K562 (cell line): ENCODE measurements at regions of chr15 and their contacts with region 1.

Region 1: DNA sequence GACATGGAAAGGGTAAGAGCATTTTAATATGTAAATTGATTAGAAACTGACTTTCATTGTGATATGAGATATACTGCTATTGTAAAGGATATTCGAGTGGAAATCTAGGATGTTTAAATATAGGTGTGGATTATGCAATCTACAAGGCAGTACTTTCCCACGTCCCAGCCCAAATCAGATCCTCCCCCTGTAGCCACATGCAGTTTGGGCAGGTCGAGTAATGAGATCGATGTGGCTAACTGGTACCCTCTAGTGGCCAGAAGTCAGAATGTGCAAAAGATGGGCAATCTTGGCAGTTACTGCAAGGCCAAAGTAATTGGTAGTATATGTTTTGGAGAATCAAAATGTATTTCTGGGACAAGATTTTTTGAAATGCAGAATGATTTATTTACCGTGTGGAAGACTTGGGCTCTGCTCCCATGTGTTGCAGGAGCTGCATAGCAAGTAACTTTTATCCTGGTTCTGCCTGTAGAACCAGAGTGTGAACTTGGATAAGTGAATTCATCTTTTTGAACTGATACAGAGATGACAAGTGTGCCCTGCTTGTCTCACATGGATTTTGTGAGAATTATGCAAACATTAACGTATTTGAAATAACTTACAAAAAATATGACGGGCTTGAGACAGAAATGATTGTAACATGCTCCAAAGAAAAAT is 94.5 kb upstream of the ADAMTSL3 start:
- DNase-seq: peak; percentile 75 to 80 (median 76)
- ATAC-seq: peak; percentile 97
- H3K4me3 ChIP-seq: no peak overlapping the region
- H3K27ac ChIP-seq: no peak overlapping the region
- H3K4me1 ChIP-seq: peaks cover 2 to 4% of the 10 kb centered on the region in 2 experiments; a peak in 3 of 5 replicates
- H3K27me3 ChIP-seq: no peaks in the 10 kb centered on the region
- CTCF ChIP-seq: peak; percentile 85 to 90 (median 88)
- EP300 ChIP-seq: no peak
- POLR2A ChIP-seq: no peak
- RAD21 ChIP-seq: peak; percentile 85 to 95

Region 2: GRCh38 chr15:82551666-82552247 is 1007.7 kb before region 1 on chr15:
- CTCF ChIA-PET with region 1: no interaction called
- POLR2A ChIA-PET with region 1: no interaction called
- in situ Hi-C with region 1: no loop called
- intact Hi-C with region 1: no loop called
- DNase-seq: no peak
- ATAC-seq: no peak
- H3K4me3 ChIP-seq: no peak overlapping the region
- H3K27ac ChIP-seq: no peak overlapping the region
- H3K4me1 ChIP-seq: peaks cover 12 to 16% of the 10 kb centered on the region in 2 experiments; a peak in 4 of 5 replicates
- H3K27me3 ChIP-seq: no peaks in the 10 kb centered on the region
- CTCF ChIP-seq: no peak
- EP300 ChIP-seq: no peak
- POLR2A ChIP-seq: no peak
- RAD21 ChIP-seq: no peak

Region 3: GRCh38 chr15:83248151-83249029 is 311.0 kb before region 1 on chr15:
- CTCF ChIA-PET with region 1: interaction called, 3 read pairs
- POLR2A ChIA-PET with region 1: no interaction called
- in situ Hi-C with region 1: loop called (anchors 10 kb)
- intact Hi-C with region 1: loop called (anchors 1 kb)
- DNase-seq: peak; percentile 26 to 69 (median 44)
- ATAC-seq: peak; percentile 85
- H3K4me3 ChIP-seq: no peak overlapping the region
- H3K27ac ChIP-seq: no peak overlapping the region
- H3K4me1 ChIP-seq: no peaks in the 10 kb centered on the region
- H3K27me3 ChIP-seq: peaks cover 3 to 17% of the 10 kb centered on the region in 2 experiments; a peak in 3 of 5 replicates
- CTCF ChIP-seq: peak; percentile 71 to 91 (median 85)
- EP300 ChIP-seq: no peak
- POLR2A ChIP-seq: no peak
- RAD21 ChIP-seq: peak; percentile 84 to 94

Region 4: DNA sequence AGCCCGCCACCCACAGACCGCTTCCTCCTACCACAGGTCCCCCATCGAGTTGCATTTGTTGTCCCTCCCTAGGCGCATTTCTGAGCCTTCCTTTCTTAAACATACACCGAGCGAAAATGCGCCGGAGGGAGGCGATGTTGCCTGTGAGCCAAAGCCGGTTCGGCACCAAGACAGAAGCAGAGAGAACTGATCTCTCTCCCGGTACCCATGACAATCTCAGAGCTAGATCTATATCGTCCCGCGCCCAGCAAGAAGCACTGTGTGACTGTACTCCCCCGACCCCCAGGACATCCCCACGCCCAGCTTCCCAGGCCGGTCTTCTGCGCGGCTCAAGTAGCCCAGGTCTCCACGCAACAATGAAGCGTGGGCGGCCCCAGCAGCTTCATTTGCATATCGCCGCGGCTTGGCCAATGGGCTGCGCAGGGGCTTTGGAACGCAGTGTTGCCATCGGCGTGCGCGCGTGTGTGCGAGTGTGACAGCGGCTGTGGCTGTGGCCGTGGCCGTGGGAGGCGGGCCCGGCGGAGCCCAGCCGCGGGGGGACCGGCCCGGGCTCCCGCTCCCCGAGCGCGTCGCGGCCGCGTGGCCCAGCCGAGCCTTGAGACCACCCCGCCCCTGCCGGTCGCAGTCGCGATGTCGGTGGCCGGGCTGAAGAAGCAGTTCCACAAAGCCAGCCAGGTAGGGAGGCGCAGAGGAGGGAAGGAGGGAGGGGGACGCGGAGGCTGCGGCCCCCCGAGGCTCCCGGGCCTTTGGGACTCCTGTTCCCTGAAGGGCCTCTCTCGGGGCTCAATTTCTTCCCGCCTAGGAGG is 112.3 kb before region 1 on chr15 and contains the start of gene SH3GL3:
- CTCF ChIA-PET with region 1: interaction called, 13 read pairs
- POLR2A ChIA-PET with region 1: interaction called, 4 read pairs
- in situ Hi-C with region 1: no loop called
- intact Hi-C with region 1: loop called (anchors 2 kb)
- DNase-seq: peak; percentile 82 to 91 (median 84)
- ATAC-seq: peak; percentile 96
- H3K4me3 ChIP-seq: peak within 1 kb of the TSS; percentile 62
- H3K27ac ChIP-seq: peak within 1 kb of the TSS; percentile 53; the same call in 2 of the 3 replicates
- H3K4me1 ChIP-seq: peaks cover 18 to 19% of the 10 kb centered on the region in 2 experiments; a peak in 4 of 5 replicates
- H3K27me3 ChIP-seq: no peaks in the 10 kb centered on the region; a peak in 1 of 5 replicates
- CTCF ChIP-seq: peak; percentile 65 to 71 (median 68)
- EP300 ChIP-seq: no peak
- POLR2A ChIP-seq: no peak
- RAD21 ChIP-seq: peak; percentile 63 to 78
- polyA plus RNA-seq, gene SH3GL3: 3.9 to 4.3 TPM

Region 5: DNA sequence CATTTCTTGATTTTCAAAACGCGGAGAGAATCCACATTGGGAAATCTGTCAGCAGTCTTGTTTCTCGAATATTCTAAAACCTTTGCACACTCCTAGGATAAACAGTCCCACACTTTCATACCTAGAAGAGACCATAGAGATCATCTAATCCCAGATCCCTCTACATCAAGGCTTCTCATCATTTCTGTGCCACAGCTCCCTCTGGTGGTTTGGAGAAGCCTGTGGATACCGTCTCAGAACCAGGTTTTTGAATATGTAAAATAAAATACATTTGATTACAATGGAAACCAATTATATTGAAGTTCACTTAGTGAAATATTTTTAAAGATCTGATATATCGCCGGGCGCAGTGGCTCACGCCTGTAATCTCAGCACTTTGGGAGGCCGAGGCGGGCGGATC is 464.2 kb after region 1 on chr15:
- CTCF ChIA-PET with region 1: no interaction called
- POLR2A ChIA-PET with region 1: no interaction called
- in situ Hi-C with region 1: no loop called
- intact Hi-C with region 1: loop called (anchors 10 kb)
- DNase-seq: peak; percentile 48 to 62 (median 60)
- ATAC-seq: peak; percentile 87
- H3K4me3 ChIP-seq: no peak overlapping the region
- H3K27ac ChIP-seq: no peak overlapping the region
- H3K4me1 ChIP-seq: no peaks in the 10 kb centered on the region
- H3K27me3 ChIP-seq: no peaks in the 10 kb centered on the region
- CTCF ChIP-seq: peak; percentile 57 to 68 (median 64)
- EP300 ChIP-seq: no peak
- POLR2A ChIP-seq: no peak
- RAD21 ChIP-seq: peak in 1 of 2 experiments; percentile 58; a peak in 2 of 4 replicates